ENCODE measurements at regions of chr20 and their contacts with region 1.

Region 1: GRCh38 chr20:13119583-13119982 is 101.5 kb upstream of the ISM1 start:
- DNase-seq: peak; percentile 47
- H3K4me3 ChIP-seq: no peak overlapping the region
- H3K27ac ChIP-seq: no peak overlapping the region
- H3K4me1 ChIP-seq: no peaks in the 10 kb centered on the region
- H3K27me3 ChIP-seq: no peaks in the 10 kb centered on the region
- CTCF ChIP-seq: peak; percentile 73

Region 2: DNA sequence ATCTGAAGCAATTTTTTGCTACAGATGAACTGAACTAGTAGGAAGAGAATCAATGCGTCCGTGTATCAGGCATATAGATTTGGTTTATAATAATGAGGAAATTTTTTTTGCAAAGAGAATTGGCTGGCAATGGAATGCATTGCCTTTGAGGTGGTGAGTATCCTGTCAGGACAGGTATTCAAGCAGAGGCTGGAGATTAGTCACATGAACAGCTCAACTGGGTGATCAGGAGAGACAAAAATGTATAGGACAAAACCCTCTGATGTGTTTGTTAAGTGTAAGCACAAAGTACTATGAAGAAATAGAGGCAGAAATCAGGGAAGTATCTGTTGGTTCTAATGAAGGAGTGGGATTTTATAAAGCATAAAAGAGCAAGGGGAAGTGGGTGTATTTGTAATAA is 182.0 kb after region 1 on chr20:
- intact Hi-C with region 1: loop called (anchors 2 kb)
- DNase-seq: no peak
- H3K4me3 ChIP-seq: no peak overlapping the region
- H3K27ac ChIP-seq: no peak overlapping the region
- H3K4me1 ChIP-seq: no peaks in the 10 kb centered on the region
- H3K27me3 ChIP-seq: no peaks in the 10 kb centered on the region
- CTCF ChIP-seq: no peak

Region 3: DNA sequence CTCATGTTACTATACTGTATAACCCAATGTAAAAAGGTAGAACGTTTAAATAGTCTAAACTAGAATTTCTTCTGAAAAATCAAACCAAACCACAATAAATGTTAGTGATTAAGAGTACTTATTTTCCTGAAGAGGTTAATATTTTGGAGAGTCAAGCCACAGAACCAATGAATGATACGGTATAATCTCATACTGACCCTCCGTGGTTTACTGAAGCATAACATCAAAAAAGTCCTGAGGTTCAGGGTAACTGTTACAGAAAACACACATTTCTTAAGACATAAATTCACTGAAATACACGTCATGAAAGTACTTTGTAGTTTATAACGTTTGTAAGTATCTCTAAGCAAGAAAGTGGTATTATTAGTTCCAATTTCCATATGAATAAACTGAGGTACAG is 636.2 kb after region 1 on chr20:
- intact Hi-C with region 1: loop called (anchors 10 kb)
- DNase-seq: no peak
- H3K4me3 ChIP-seq: no peak overlapping the region
- H3K27ac ChIP-seq: no peak overlapping the region
- H3K4me1 ChIP-seq: no peaks in the 10 kb centered on the region
- H3K27me3 ChIP-seq: no peaks in the 10 kb centered on the region
- CTCF ChIP-seq: no peak

Measured in colonic mucosa (tissue), 4 donors.